Calu3 (cell line): ENCODE measurements at regions of chr12 and their contacts with region 1.

Region 1: DNA sequence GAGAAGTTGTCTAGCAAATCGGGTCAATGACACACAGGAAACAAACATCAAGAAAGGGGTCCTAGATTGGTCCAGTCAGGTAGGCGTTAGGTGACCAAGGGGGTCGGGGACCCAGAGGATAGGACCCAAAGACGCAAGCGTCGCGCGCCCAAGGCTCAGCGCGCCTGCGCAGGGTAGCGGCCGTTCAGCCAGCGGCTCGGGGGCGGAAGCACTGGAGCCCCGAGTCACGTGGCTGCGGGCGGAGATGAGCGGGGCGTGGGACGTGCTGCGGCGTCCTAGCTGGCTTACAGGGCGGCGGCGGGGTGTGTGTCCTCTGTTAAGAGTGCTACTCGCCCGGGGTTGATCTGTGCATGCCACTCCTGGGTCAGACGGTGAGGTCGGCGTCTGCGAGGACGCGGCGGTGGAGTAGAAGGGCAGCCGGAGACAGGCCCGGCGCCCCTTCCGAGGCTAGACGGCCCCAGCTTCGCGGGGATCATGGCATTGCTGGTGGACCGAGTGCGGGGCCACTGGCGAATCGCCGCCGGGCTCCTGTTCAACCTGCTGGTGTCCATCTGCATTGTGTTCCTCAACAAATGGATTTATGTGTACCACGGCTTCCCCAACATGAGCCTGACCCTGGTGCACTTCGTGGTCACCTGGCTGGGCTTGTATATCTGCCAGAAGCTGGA is at the start of gene SLC35E3:
- DNase-seq: peak; percentile 94
- H3K4me3 Mint-ChIP-seq: peak within 1 kb of the TSS; percentile 98
- H3K27ac Mint-ChIP-seq: peak within 1 kb of the TSS; percentile 60
- H3K4me1 Mint-ChIP-seq: peaks cover 8% of the 10 kb centered on the region
- H3K27me3 Mint-ChIP-seq: no peaks in the 10 kb centered on the region
- CTCF ChIP-seq: no peak
- total RNA-seq, gene SLC35E3: 7.9 and 10.8 TPM in 2 replicates

Region 2: DNA sequence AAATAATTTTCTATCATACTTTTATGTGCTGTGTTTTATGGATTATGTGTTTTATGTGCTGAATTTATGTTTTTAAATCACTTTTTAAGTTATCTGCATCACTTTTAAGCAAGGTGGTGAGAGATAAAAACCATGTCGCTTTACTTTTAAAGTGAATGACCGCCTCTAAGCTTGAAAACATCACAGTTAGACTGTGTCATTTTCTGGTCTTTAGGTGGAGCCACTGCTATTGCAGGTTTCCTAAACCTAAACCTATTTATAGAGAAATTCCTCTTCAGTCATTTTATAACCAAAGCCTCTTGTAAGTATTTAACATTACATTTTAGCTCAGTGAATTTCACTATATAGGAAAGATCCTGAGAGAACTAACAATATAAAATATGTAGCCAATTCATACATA is 40.9 kb after region 1 on chr12:
- CTCF ChIA-PET with region 1: interaction called, 3 read pairs
- intact Hi-C with region 1: loop called (anchors 5 kb)
- DNase-seq: no peak
- H3K4me3 Mint-ChIP-seq: no peak overlapping the region
- H3K27ac Mint-ChIP-seq: peak overlapping the region; percentile 76
- H3K4me1 Mint-ChIP-seq: peaks cover 24% of the 10 kb centered on the region
- H3K27me3 Mint-ChIP-seq: no peaks in the 10 kb centered on the region
- CTCF ChIP-seq: no peak

Region 3: DNA sequence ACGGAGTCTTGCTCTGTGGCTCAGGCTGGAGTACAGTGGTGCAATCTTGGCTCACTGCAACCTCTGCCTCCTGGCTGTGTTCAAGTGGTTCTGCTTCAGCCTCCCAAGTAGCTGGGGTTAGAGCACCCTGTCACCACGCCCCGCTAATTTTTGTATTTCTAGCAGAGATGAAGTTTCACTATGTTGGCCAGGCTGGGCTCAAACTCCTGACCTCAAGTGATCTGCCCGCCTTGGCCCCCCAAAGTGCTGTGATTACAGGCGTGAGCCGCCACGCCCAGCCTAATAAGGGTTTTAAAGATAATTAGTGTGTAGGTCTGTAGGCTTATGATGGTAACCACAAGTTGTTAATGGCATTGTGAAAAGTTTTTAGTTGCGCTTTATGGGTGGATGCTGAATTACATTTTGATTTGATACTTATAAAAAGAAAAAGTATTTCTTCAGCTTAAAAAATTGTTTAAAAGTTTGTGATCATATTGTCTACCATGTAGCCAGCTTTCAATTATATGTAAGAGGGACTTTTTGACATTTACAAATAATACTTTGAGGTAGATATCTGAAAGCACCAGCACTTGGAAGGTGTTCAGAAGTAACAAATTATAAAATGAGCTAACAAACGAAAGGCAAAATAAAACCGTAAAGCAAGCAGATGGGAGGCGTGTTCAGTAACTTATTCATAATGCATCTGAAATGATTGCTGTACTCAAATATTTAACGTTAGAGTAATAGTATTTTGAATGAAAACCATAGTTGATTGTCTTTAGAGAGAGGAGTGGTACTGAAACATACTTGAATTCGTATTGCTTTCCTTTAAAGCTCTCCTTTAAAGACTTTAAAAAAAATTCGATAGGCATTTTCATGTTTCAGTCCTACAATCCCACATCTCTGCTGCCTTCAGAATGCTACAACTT is 99.0 kb after region 1 on chr12:
- CTCF ChIA-PET with region 1: no interaction called
- intact Hi-C with region 1: no loop called
- DNase-seq: no peak
- H3K4me3 Mint-ChIP-seq: no peak overlapping the region
- H3K27ac Mint-ChIP-seq: no peak overlapping the region
- H3K4me1 Mint-ChIP-seq: no peaks in the 10 kb centered on the region
- H3K27me3 Mint-ChIP-seq: no peaks in the 10 kb centered on the region
- CTCF ChIP-seq: no peak